PC-9 (cell line): ENCODE measurements at regions of chr12 and their contacts with region 1.

Region 1: GRCh38 chr12:65602610-65603295 is 221.5 kb upstream of the HMGA2 start:
- DNase-seq: peak; percentile 74 to 97
- H3K4me3 ChIP-seq: peak overlapping the region; percentile 53; the same call in 1 of the 2 replicates
- H3K27ac ChIP-seq: peak overlapping the region; percentile 82
- H3K4me1 ChIP-seq: peaks cover 70% of the 10 kb centered on the region
- H3K27me3 ChIP-seq: no peaks in the 10 kb centered on the region
- CTCF ChIP-seq: peak; percentile 94

Region 2: DNA sequence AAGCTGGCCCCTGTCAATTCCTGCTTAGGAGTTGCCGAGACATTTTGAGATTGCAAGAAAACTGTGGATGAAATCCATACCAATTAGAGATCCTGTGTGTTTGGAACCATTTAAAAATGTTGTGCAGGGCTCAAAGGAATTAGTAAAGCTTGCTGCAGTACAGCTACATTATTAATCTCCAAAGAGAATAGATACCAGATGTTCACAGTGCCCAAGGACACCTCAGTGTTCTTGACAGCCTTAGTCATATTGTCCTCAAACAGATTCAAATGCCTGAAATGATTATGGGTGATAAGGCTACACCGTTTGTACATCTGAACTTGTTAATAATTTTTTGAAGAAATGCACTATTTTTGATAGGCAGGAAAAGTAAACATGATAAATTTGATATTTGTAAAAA is 159.7 kb before region 1 on chr12:
- CTCF ChIA-PET with region 1: no interaction called
- POLR2A ChIA-PET with region 1: no interaction called
- intact Hi-C with region 1: no loop called
- DNase-seq: no peak
- H3K4me3 ChIP-seq: no peak overlapping the region
- H3K27ac ChIP-seq: no peak overlapping the region
- H3K4me1 ChIP-seq: no peaks in the 10 kb centered on the region
- H3K27me3 ChIP-seq: no peaks in the 10 kb centered on the region
- CTCF ChIP-seq: no peak

Region 3: DNA sequence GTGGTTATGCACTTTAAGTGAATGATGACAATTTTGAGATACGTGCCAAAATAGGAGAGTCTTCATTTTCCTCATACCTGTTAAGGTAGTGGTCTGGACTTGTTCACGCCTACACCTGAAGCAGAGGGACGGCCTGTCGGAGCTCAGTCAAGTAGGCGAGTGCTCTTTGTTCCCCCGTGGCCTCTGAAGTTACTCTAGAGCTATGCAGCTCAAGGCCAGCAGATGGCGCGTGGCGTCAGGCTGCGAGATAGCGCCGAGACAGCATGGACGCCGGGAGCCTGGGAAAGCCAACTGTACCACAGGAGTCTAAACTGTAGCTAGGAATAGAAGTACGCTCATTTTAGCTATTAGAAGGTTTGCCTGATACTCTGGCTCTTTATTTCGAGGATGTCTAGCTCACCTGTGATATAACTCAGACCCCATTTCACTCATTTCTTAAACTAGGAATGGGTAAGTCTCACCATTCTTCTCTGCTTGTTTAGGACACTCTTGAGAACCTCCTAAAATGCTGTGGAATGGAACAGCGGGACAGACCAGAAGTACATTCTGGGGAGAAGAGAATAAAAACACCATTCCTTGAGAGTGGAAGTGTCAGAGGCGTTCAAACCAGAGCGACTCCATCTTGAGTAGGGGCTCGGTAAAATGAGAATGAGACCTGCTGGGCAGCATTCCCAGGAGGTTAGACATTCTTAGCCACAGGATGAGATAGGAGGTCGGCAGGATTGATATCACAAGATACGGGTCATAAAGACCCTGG is 45.9 kb before region 1 on chr12:
- CTCF ChIA-PET with region 1: interaction called, 9 read pairs
- POLR2A ChIA-PET with region 1: no interaction called
- intact Hi-C with region 1: loop called (anchors 1 kb)
- DNase-seq: peak; percentile 63 to 82
- H3K4me3 ChIP-seq: no peak overlapping the region
- H3K27ac ChIP-seq: no peak overlapping the region
- H3K4me1 ChIP-seq: peaks cover 11% of the 10 kb centered on the region
- H3K27me3 ChIP-seq: no peaks in the 10 kb centered on the region
- CTCF ChIP-seq: peak; percentile 91

Region 4: GRCh38 chr12:65649126-65649525 is 46.4 kb after region 1 on chr12:
- CTCF ChIA-PET with region 1: interaction called, 3 read pairs
- POLR2A ChIA-PET with region 1: interaction called, 3 read pairs
- intact Hi-C with region 1: loop called (anchors 5 kb)
- DNase-seq: peak; percentile 27 to 98
- H3K4me3 ChIP-seq: no peak overlapping the region
- H3K27ac ChIP-seq: peak overlapping the region; percentile 96
- H3K4me1 ChIP-seq: peaks cover 47% of the 10 kb centered on the region
- H3K27me3 ChIP-seq: no peaks in the 10 kb centered on the region
- CTCF ChIP-seq: no peak

Region 5: DNA sequence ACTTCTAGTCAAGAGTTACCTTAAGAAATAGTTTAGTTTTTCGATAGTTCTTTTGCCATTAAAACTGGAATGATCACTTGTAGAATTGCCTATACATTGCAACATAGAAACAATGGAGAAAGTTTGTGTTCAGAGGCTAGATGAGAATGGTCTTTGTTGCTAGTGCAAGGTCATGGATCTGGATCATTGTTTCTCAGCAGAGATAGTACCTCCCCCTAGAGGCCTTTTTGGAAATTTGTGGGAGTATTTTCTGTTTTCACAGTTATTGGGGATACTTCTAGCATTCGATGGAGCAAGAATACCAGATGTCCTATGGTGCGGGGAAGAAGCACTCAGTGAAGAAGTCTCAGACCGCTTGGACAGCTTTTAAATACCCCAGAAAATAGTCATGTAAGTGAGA is 82.8 kb after region 1 on chr12:
- CTCF ChIA-PET with region 1: no interaction called
- POLR2A ChIA-PET with region 1: no interaction called
- intact Hi-C with region 1: loop called (anchors 5 kb)
- DNase-seq: peak in 1 of 2 experiments; percentile 45
- H3K4me3 ChIP-seq: no peak overlapping the region
- H3K27ac ChIP-seq: no peak overlapping the region
- H3K4me1 ChIP-seq: no peaks in the 10 kb centered on the region
- H3K27me3 ChIP-seq: no peaks in the 10 kb centered on the region
- CTCF ChIP-seq: peak; percentile 63

Region 6: DNA sequence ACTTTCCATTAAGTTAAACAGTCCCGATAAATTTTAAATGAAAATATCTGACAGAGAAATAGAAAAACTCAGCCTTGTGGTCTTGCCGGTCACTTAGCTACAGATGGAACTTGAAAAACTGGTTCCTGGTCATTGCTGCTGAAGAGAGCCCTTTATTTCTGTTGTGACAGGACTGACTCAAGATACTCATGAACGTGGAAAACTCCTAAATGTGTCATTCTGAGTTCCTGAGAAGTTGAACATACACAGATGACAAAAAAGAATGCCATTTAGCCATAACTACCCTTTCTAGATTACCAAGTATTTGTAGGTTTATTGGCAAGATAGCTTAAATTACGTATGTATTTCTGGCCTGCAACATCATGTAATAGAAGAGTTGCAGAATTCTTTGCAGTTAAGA is 355.7 kb after region 1 on chr12:
- CTCF ChIA-PET with region 1: no interaction called
- POLR2A ChIA-PET with region 1: no interaction called
- intact Hi-C with region 1: loop called (anchors 1 kb)
- DNase-seq: peak; percentile 35 to 93
- H3K4me3 ChIP-seq: no peak overlapping the region
- H3K27ac ChIP-seq: peak overlapping the region; percentile 38
- H3K4me1 ChIP-seq: peaks cover 36% of the 10 kb centered on the region
- H3K27me3 ChIP-seq: no peaks in the 10 kb centered on the region
- CTCF ChIP-seq: no peak

Region 7: DNA sequence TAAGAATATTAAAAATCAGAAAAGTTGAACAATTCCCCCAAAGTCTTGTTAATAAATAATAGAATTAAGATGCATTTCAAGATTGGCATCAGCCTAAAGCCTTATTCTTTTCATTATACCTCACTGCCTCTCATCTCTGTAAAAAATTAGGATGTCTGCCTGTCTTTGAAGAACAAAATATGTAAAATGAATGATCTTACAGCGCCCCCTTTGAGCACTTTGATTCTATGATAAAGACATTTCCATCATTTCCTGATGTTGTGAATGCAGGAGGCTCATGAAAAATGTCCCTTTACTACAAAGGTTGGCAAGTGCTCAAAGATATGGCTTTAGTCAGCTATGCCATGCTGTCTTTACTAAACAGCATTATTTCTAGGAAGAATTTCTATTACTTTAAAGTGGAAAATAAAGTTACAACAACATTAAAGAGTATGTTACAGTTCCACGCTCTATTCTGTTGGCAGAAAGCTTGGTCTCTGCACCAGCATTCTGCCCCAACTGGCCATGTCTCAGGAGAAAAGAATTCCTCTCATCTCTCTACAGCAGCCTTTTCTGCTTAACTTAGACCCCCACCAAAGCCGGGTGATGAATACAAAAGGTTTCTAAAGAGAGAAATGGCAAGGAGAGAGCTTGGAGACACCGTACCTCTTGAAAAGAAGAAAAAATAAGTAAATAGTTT is 432.7 kb after region 1 on chr12:
- CTCF ChIA-PET with region 1: no interaction called
- POLR2A ChIA-PET with region 1: no interaction called
- intact Hi-C with region 1: loop called (anchors 1 kb)
- DNase-seq: no peak
- H3K4me3 ChIP-seq: no peak overlapping the region
- H3K27ac ChIP-seq: no peak overlapping the region
- H3K4me1 ChIP-seq: peaks cover 7% of the 10 kb centered on the region; the same call in 1 of the 2 replicates
- H3K27me3 ChIP-seq: no peaks in the 10 kb centered on the region
- CTCF ChIP-seq: peak; percentile 68

Region 8: DNA sequence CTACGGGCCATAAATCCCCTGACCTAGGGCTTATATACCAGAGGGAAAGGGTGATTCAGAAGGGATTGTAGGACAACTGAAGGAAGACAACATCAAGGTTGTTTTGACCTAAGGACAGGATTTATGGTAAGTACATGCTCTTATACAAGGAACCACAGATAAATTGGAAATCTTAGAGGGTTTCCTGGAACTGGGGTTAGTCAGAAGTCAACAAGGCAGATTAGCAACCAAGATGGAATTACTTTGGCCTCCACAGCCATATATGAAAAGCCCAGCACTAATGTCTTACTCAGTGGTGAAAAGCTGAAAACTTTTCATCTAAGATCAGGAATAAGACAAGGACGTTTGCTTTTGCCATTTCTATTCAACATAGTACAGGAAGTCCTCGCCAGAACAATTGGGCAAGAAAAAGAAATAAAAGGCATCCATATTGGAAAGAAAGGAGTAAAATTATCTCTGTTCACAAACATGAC is 561.6 kb after region 1 on chr12:
- CTCF ChIA-PET with region 1: no interaction called
- POLR2A ChIA-PET with region 1: no interaction called
- intact Hi-C with region 1: no loop called
- DNase-seq: no peak
- H3K4me3 ChIP-seq: no peak overlapping the region
- H3K27ac ChIP-seq: no peak overlapping the region
- H3K4me1 ChIP-seq: peaks cover 10% of the 10 kb centered on the region
- H3K27me3 ChIP-seq: no peaks in the 10 kb centered on the region
- CTCF ChIP-seq: no peak